ENCODE measurements at regions of chr5 and their contacts with region 1.

Region 1: DNA sequence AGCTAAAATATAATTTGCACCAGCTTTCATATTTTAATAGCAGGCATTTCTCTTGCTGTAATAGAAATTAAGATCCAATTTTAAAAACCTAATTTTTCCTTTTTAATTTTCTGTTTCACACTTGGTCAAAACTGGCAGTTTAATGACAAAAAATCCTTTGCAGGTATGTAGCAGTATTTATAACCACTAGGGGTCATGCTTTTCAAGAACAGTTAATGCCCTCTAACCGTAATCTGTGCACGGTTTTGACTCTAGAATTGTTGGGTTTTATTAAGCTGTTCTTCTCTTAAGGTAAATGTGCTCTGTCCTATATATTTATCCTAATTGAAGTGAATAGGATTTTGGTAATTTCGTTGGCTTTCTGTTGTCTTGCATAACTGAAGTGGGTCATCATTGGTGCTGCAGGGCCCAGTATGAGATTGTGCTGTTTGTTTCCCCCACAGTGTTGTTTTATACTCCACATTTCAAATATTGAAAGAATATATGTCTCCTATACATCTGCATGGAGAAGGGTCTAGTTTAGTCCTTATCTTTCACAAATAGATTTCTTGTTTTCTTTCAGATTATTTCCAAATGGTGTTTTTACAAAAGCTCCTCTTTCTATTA is 107.4 kb downstream of the SCAMP1 start:
- DNase-seq: peak; percentile 20
- H3K4me3 ChIP-seq: no peak overlapping the region
- H3K27ac ChIP-seq: no peak overlapping the region
- H3K4me1 ChIP-seq: no peaks in the 10 kb centered on the region
- H3K27me3 ChIP-seq: no peaks in the 10 kb centered on the region
- CTCF ChIP-seq: peak; percentile 72 to 76

Region 2: DNA sequence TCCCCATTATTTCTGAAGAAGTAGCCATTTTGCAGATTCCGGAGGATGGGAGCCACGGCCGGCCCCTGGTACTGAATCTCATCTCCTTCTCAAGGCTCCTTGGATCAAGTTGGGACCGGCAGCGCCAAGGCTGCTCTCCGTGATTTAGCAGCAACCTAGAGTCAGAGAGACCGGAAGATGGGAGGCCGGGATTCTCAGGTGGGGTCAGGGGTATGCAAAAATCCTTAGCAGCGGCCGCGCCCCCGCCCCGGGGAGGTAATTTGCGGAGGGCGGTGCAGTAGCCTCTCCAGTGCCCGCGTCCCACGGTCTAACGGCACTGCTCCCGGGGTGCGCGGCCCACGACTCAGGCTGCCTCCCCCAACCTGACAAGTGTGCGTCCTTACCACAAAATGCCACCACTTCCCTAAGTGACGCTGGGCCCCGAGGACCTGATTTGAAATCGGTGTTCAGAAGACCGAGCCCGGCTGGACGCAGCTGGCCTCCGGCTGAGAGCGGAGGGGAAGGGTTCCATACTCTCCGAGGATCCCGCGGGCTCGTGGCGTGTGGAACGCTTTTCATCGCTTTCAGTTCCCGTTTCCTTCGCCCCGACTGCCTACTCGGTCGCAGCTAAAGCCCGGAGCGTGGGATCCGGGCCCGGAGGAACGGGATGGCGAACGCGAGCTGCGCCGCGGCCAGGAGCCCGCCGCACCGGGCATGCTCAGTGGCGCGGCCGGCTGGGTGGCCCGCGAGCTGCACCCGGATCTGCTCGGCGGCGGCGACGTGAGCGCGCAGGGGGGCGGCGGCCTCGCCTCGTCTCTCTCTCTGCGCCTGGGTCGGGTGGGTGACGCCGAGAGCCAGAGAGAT is 107.8 kb before region 1 on chr5 and contains the start of gene SCAMP1:
- CTCF ChIA-PET with region 1: no interaction called
- dilution Hi-C with region 1: no loop called
- in situ Hi-C with region 1: no loop called
- intact Hi-C with region 1: loop called (anchors 5 kb)
- DNase-seq: peak; percentile 94
- H3K4me3 ChIP-seq: peak within 1 kb of the TSS; percentile 95 to 100 (median 96)
- H3K27ac ChIP-seq: peak within 1 kb of the TSS; percentile 76
- H3K4me1 ChIP-seq: no peaks in the 10 kb centered on the region
- H3K27me3 ChIP-seq: no peaks in the 10 kb centered on the region
- CTCF ChIP-seq: peak; percentile 5 to 42
- total RNA-seq, gene SCAMP1: 48.8 to 126 TPM

Region 3: GRCh38 chr5:78738693-78739300 is 270.9 kb after region 1 on chr5:
- CTCF ChIA-PET with region 1: interaction called, 16 read pairs
- dilution Hi-C with region 1: no loop called
- in situ Hi-C with region 1: no loop called
- intact Hi-C with region 1: no loop called
- DNase-seq: no peak
- H3K4me3 ChIP-seq: no peak overlapping the region
- H3K27ac ChIP-seq: no peak overlapping the region
- H3K4me1 ChIP-seq: no peaks in the 10 kb centered on the region
- H3K27me3 ChIP-seq: no peaks in the 10 kb centered on the region
- CTCF ChIP-seq: no peak

Region 4: DNA sequence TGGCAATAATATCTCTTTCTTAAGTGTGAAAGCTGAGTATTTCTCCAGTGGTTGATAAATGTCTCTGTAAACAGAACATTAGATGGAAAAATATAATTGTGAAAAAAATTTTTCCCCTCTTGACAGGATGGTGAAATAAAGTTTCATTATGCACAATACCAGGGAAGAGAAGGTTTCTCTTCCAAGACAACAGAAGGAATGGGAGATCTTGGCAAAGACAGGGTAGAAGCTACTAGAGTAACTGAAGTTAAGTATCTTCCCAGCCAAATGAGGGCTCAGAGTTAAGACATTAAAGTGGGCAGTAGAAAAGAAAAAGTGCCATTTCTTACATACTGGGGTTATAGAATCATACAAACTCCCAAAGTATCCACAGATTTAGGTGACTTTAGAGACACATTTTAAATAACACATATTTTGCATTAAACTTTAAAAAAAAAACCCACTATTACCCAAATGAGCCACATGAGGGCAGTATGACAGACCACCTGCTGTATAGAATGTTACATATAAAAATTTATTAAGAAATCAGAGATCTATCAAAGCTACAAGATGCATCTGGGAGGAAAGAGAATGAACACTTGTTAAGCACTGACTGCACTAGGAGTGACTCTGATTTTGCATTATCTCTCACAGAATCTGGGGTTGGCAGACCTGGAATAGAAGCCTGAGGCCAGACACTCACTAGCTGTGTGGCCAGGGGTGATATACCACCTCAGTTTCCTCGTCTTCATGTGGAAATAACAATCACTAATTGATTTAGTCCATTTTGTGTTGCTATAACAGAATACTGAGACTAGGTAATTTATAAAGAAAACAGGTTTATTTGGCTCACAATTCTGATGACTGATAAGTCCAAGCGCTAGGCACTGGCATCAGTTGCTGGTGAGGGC is 418.7 kb after region 1 on chr5:
- CTCF ChIA-PET with region 1: no interaction called
- dilution Hi-C with region 1: no loop called
- in situ Hi-C with region 1: no loop called
- intact Hi-C with region 1: loop called (anchors 5 kb)
- DNase-seq: no peak
- H3K4me3 ChIP-seq: no peak overlapping the region
- H3K27ac ChIP-seq: no peak overlapping the region
- H3K4me1 ChIP-seq: peaks cover 3% of the 10 kb centered on the region
- H3K27me3 ChIP-seq: no peaks in the 10 kb centered on the region
- CTCF ChIP-seq: peak; percentile 49 to 53

Region 5: DNA sequence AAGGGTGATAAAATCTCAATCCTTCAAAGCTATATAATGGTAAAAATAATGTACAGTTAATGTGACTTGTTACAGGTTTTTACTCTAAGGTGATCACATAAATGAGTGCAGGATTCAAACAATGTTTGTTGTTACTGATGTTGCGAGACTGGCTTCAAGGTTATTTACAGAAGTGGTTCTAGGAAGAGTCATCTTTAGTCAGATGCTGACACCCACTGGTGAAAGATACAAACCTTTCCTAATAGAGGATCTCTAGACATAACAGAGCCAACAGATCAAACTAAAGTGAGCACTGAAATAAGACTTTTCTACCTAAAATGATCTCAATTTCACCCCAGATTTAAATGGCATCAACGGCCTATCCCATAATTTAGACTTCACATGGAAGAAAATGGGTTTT is 497.0 kb after region 1 on chr5:
- CTCF ChIA-PET with region 1: no interaction called
- dilution Hi-C with region 1: no loop called
- in situ Hi-C with region 1: no loop called
- intact Hi-C with region 1: loop called (anchors 2 kb)
- DNase-seq: peak; percentile 45
- H3K4me3 ChIP-seq: no peak overlapping the region
- H3K27ac ChIP-seq: no peak overlapping the region
- H3K4me1 ChIP-seq: no peaks in the 10 kb centered on the region
- H3K27me3 ChIP-seq: no peaks in the 10 kb centered on the region
- CTCF ChIP-seq: peak; percentile 18 to 61